Breast epithelium (tissue), 4 donors: ENCODE measurements at regions of chr10 and their contacts with region 1.

Region 1: GRCh38 chr10:73838827-73839226 is 27.4 kb upstream of the NDST2 start:
- DNase-seq: no peak
- H3K4me3 ChIP-seq: no peak overlapping the region
- H3K27ac ChIP-seq: no peak overlapping the region
- H3K4me1 ChIP-seq: no peaks in the 10 kb centered on the region
- H3K27me3 ChIP-seq: no peaks in the 10 kb centered on the region
- CTCF ChIP-seq: no peak
- POLR2A ChIP-seq: no peak

Region 2: GRCh38 chr10:73495884-73496674 is 342.7 kb before region 1 on chr10 and contains the start of gene PPP3CB:
- intact Hi-C with region 1: no loop called
- DNase-seq: peak; percentile 85 to 87
- H3K4me3 ChIP-seq: peak within 1 kb of the TSS; percentile 70 to 93 (median 83)
- H3K27ac ChIP-seq: peak within 1 kb of the TSS; percentile 98
- H3K4me1 ChIP-seq: peaks cover 0 to 3% of the 10 kb centered on the region in 2 donors
- H3K27me3 ChIP-seq: no peaks in the 10 kb centered on the region
- CTCF ChIP-seq: no peak
- POLR2A ChIP-seq: no peak
- total RNA-seq, gene PPP3CB: 42.0 to 79.0 (median 49.5) TPM

Region 3: DNA sequence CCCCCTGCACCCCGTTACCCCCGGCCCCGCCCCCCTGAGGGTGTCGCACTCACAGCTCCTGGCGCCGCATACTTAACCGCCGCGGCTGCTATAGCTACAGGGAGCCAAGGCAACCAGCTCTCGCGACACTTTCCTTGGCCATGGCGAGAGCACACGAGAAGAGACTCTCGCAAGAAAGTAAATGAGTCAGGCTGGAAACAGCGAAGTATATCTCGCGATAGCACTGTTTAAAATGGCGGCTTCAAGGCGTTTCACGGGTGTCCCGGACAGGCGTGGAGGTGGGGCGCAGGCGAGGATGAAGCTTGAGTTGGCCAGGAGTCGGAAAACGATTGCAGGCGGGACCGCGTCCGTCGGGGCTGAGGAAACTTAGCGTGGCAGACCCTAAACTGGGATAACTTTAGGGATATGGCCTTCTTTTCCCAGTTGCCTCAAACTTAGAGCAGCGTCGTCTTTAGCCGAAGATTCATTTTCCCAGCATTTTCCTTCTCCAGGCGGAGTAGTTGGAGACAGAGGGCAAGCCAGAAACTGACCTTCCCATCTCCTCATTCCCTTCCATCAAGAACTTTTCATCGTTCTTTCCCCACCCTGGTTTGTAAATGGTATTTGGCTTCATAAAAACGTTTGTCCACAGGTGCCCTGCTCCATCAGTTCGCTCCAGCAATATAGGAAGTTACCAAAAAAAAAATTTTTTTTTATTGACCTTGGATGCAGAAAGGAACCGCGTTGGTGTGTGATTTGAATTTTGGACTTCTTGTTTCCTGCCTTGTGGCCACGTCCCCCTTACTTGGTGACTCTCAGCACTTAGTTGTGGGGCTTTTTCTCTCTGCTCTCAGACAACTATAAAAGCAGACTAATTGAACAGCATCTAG is 212.7 kb before region 1 on chr10:
- intact Hi-C with region 1: no loop called
- DNase-seq: peak; percentile 91 to 95
- H3K4me3 ChIP-seq: peak overlapping the region; percentile 82 to 93 (median 92)
- H3K27ac ChIP-seq: peak overlapping the region; percentile 93 to 98
- H3K4me1 ChIP-seq: no peaks in the 10 kb centered on the region
- H3K27me3 ChIP-seq: no peaks in the 10 kb centered on the region
- CTCF ChIP-seq: no peak
- POLR2A ChIP-seq: peak; percentile 31

Region 4: GRCh38 chr10:73879296-73880173 is 40.7 kb after region 1 on chr10:
- intact Hi-C with region 1: loop called (anchors 1 kb)
- DNase-seq: peak; percentile 82 to 86
- H3K4me3 ChIP-seq: no peak overlapping the region
- H3K27ac ChIP-seq: peak overlapping the region in 1 of 2 donors; percentile 10
- H3K4me1 ChIP-seq: no peaks in the 10 kb centered on the region
- H3K27me3 ChIP-seq: no peaks in the 10 kb centered on the region
- CTCF ChIP-seq: peak; percentile 87 to 97 (median 96)
- POLR2A ChIP-seq: no peak

Region 5: GRCh38 chr10:73946253-73947155 is 107.7 kb after region 1 on chr10:
- intact Hi-C with region 1: loop called (anchors 1 kb)
- DNase-seq: no peak
- H3K4me3 ChIP-seq: no peak overlapping the region
- H3K27ac ChIP-seq: no peak overlapping the region
- H3K4me1 ChIP-seq: no peaks in the 10 kb centered on the region
- H3K27me3 ChIP-seq: no peaks in the 10 kb centered on the region
- CTCF ChIP-seq: no peak
- POLR2A ChIP-seq: no peak